ENCODE measurements at regions of chr13 and their contacts with region 1.

Region 1: DNA sequence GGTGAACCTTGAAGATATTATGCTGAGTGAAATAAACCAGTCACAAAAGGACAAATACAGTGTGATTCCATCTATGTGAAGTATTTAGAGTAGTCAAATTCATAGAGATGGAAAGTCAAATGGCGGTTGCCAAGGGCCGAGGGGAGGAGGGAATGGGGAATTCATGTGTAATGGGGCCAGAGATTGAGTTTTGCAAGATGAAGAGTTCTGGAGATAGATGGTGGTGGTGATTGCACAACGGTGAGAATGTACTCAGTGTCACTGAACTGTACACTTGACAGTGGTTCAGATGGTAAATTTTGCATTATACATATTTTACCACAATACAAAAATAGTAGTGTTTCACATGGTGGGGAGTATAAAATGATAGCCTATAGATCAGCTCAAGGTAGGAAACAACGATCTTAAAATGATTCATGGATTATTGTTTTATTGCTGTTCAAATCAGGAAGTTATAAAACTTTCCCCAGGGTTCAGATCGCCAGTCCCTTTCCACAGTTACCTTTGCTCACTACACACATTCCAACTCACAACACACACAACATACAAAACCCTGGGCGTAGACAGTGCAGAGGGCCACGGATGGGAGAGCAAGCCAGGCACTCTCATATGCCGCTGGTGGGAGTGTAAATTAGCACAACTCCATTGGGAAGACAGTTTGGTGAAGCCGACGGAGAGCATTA is 219.9 kb downstream of the ZIC5 start:
- DNase-seq: peak in 2 of 3 donors; percentile 57 to 60
- ATAC-seq: peak; percentile 97
- H3K4me3 ChIP-seq: no peak overlapping the region
- H3K4me1 ChIP-seq: peaks cover 9% of the 10 kb centered on the region
- CTCF ChIP-seq: no peak

Region 2: DNA sequence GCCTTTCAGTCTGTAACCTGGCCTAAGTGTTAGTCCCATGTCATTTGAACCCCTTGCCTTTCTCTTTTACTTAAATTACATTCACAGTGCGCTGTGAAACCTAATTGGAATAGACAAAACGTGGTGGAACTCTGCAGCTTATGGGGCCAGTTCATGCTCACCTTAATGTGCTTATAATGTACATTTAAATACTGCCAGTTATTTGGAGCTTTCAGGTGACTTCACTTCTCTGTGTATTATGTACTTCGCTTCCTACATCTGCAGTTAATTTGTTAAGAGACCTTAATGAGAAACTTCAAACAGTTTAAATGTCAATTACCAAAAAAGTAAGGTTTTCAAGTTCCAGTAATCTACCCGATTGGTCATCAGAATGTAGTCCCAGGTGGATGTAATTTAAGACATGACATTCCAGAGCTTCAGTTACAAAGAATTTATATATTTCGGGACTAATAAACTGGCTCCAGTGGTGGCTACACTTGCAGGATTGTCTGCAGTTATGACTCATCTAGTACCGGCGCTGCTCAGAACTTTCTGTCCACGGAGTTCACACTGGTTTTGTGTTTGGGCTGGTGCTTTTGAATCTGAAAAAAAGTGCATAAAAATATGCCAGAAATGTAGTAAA is 125.1 kb before region 1 on chr13:
- intact Hi-C with region 1: no loop called
- DNase-seq: no peak
- ATAC-seq: no peak
- H3K4me3 ChIP-seq: no peak overlapping the region
- H3K4me1 ChIP-seq: no peaks in the 10 kb centered on the region
- CTCF ChIP-seq: no peak

Region 3: GRCh38 chr13:99782669-99783068 is 31.0 kb after region 1 on chr13:
- intact Hi-C with region 1: loop called in 1 of 2 experiments (anchors 2 kb)
- DNase-seq: no peak
- ATAC-seq: no peak
- H3K4me3 ChIP-seq: no peak overlapping the region
- H3K4me1 ChIP-seq: no peaks in the 10 kb centered on the region
- CTCF ChIP-seq: no peak

Region 4: GRCh38 chr13:99796175-99796819 is 44.6 kb after region 1 on chr13:
- intact Hi-C with region 1: no loop called
- DNase-seq: peak in 1 of 3 donors; percentile 62
- ATAC-seq: no peak
- H3K4me3 ChIP-seq: no peak overlapping the region
- H3K4me1 ChIP-seq: no peaks in the 10 kb centered on the region
- CTCF ChIP-seq: no peak